Naive thymus-derived CD4-positive, alpha-beta T cell (primary cell): ENCODE measurements at regions of chr1 and their contacts with region 1.

Region 1: GRCh38 chr1:27473755-27474154 is 16.2 kb downstream of the WASF2 start:
- DNase-seq: peak in 4 of 9 donors; percentile 16 to 31 (median 24)
- ATAC-seq: peak; percentile 40
- H3K4me3 ChIP-seq: no peak overlapping the region
- H3K4me3 Mint-ChIP-seq: peak overlapping the region; percentile 5 to 77 (median 58)
- H3K27ac ChIP-seq: no peak overlapping the region
- H3K27ac Mint-ChIP-seq: peak overlapping the region; percentile 10 to 82 (median 66)
- H3K4me1 ChIP-seq: peaks cover 17 to 45% of the 10 kb centered on the region in 2 donors
- H3K4me1 Mint-ChIP-seq: peaks cover 64 to 93% (median 83%) of the 10 kb centered on the region in 7 donors
- H3K27me3 ChIP-seq: no peaks in the 10 kb centered on the region
- H3K27me3 Mint-ChIP-seq: no peaks in the 10 kb centered on the region

Region 2: DNA sequence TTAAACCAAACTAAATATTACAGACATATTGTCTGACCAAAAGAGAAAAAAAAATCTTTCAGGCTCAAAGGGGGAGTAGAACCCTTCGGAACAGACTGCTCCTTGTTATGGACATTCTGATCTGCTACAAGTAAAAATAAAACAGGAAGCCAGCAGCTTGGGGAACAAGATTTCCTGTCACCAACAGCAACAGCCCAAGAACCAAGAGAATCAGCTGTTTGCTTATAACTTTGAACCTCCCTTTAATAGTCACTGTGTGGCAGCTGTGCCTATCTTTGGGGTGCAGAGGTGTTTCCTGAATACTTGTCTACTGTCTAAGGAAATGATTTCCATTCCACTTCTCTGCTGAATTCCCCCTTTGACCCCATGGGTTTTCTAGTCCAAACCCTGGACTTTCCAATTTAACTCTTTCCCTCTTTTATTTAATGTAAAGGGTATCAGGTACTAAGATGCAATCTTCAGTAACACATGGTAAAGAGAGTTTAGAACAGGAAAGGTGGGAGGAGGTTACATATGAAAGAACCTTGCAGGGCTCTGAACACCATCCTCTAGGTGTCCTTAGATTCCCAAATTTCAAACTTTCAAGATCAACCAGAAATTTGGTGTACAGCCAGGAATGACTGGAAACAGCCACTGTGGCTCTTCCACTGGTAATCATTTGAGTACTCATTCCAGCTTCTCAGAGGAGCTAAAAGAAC is 42.7 kb before region 1 on chr1:
- CTCF ChIA-PET with region 1: no interaction called
- POLR2A ChIA-PET with region 1: no interaction called
- intact Hi-C with region 1: loop called in 1 of 2 experiments (anchors 5 kb)
- DNase-seq: peak in 7 of 9 donors; percentile 50 to 72 (median 69)
- ATAC-seq: peak; percentile 81
- H3K4me3 ChIP-seq: peak overlapping the region; percentile 21
- H3K4me3 Mint-ChIP-seq: peak overlapping the region; percentile 58 to 94 (median 82)
- H3K27ac ChIP-seq: peak overlapping the region; percentile 74
- H3K27ac Mint-ChIP-seq: peak overlapping the region; percentile 71 to 96 (median 89)
- H3K4me1 ChIP-seq: peaks cover 33 to 86% of the 10 kb centered on the region in 2 donors
- H3K4me1 Mint-ChIP-seq: peaks cover 54 to 91% (median 77%) of the 10 kb centered on the region in 7 donors
- H3K27me3 ChIP-seq: no peaks in the 10 kb centered on the region
- H3K27me3 Mint-ChIP-seq: no peaks in the 10 kb centered on the region